B cell (primary cell): ENCODE measurements at regions of chr2 and their contacts with region 1.

Region 1: DNA sequence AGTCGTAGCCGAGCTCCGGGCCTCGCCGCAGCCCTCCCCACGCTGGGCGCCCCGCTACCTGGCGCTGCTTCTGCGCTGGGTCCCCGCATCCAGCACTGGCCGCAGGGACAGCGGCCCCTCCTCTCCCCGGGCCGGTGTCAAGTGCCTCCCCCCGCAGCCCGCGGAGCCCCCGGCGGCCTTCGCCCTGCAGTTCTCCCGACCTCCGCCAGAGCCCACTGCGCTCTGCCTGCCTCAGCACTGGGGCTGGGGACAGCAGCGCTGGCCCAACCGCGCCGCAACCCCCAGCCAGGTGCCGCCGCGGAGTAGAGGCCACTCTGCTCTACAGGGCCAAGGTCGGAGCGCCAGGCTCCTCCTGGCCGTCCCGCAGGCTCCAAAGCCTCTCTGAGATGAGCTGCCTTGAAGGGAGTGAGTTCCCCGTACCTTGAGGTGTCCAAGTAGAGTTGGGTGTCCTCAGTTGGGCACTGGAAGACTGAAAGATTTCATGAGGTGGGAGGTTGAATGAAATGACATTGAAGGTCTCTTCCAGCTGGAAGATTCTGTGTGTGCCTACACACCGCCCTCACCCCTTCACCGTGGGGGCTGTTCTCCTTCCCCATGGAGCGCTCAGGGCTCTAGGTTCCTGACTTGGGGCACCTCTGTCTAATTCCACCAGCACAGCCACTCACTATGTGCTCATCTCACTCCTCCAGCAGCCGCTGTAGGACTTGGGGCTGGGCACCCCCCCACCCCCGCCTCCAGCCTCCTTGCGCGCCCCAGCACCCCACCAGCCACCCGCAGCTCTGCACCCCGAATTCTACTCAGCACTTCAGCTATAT is 854 bp upstream of the DNMT3A start:
- DNase-seq: peak; percentile 90
- ATAC-seq: peak; percentile 91
- H3K4me3 ChIP-seq: peak overlapping the region in 4 of 5 experiments; percentile 37 to 70 (median 55)
- H3K4me3 Mint-ChIP-seq: peak overlapping the region; percentile 85
- H3K27ac ChIP-seq: no peak overlapping the region
- H3K27ac Mint-ChIP-seq: peak overlapping the region; percentile 87
- H3K4me1 ChIP-seq: peaks cover 8 to 10% of the 10 kb centered on the region in 2 donors
- H3K4me1 Mint-ChIP-seq: peaks cover 20% of the 10 kb centered on the region
- H3K27me3 ChIP-seq: peaks cover 0 to 4% (median 1%) of the 10 kb centered on the region in 4 experiments
- H3K27me3 Mint-ChIP-seq: no peaks in the 10 kb centered on the region
- CTCF ChIP-seq: peak; percentile 96

Region 2: GRCh38 chr2:25301453-25302352 is 40.9 kb before region 1 on chr2:
- CTCF ChIA-PET with region 1: no interaction called
- POLR2A ChIA-PET with region 1: no interaction called
- intact Hi-C with region 1: loop called (anchors 5 kb)
- DNase-seq: peak; percentile 66
- ATAC-seq: peak; percentile 92
- H3K4me3 ChIP-seq: no peak overlapping the region
- H3K4me3 Mint-ChIP-seq: peak overlapping the region; percentile 58
- H3K27ac ChIP-seq: no peak overlapping the region
- H3K27ac Mint-ChIP-seq: peak overlapping the region; percentile 23
- H3K4me1 ChIP-seq: peaks cover 28 to 34% of the 10 kb centered on the region in 2 donors
- H3K4me1 Mint-ChIP-seq: peaks cover 33% of the 10 kb centered on the region
- H3K27me3 ChIP-seq: no peaks in the 10 kb centered on the region
- H3K27me3 Mint-ChIP-seq: no peaks in the 10 kb centered on the region
- CTCF ChIP-seq: no peak

Region 3: GRCh38 chr2:25401307-25402026 is 58.9 kb after region 1 on chr2:
- CTCF ChIA-PET with region 1: no interaction called
- POLR2A ChIA-PET with region 1: no interaction called
- intact Hi-C with region 1: no loop called
- DNase-seq: no peak
- ATAC-seq: no peak
- H3K4me3 ChIP-seq: no peak overlapping the region
- H3K4me3 Mint-ChIP-seq: no peak overlapping the region
- H3K27ac ChIP-seq: peak overlapping the region; percentile 69 to 77
- H3K27ac Mint-ChIP-seq: peak overlapping the region; percentile 80
- H3K4me1 ChIP-seq: peaks cover 67 to 80% of the 10 kb centered on the region in 2 donors
- H3K4me1 Mint-ChIP-seq: peaks cover 72% of the 10 kb centered on the region
- H3K27me3 ChIP-seq: no peaks in the 10 kb centered on the region
- H3K27me3 Mint-ChIP-seq: no peaks in the 10 kb centered on the region
- CTCF ChIP-seq: no peak

Region 4: GRCh38 chr2:25567406-25567805 is 224.8 kb after region 1 on chr2:
- CTCF ChIA-PET with region 1: interaction called, 3 read pairs
- POLR2A ChIA-PET with region 1: no interaction called
- intact Hi-C with region 1: loop called (anchors 2 kb)
- DNase-seq: peak; percentile 71
- ATAC-seq: peak; percentile 69
- H3K4me3 ChIP-seq: no peak overlapping the region
- H3K4me3 Mint-ChIP-seq: no peak overlapping the region
- H3K27ac ChIP-seq: peak overlapping the region in 1 of 2 donors; percentile 2
- H3K27ac Mint-ChIP-seq: no peak overlapping the region
- H3K4me1 ChIP-seq: peaks cover 17 to 19% of the 10 kb centered on the region in 2 donors
- H3K4me1 Mint-ChIP-seq: peaks cover 28% of the 10 kb centered on the region
- H3K27me3 ChIP-seq: no peaks in the 10 kb centered on the region
- H3K27me3 Mint-ChIP-seq: no peaks in the 10 kb centered on the region
- CTCF ChIP-seq: peak; percentile 77